ENCODE measurements at regions of chr12 and their contacts with region 1.

Region 1: DNA sequence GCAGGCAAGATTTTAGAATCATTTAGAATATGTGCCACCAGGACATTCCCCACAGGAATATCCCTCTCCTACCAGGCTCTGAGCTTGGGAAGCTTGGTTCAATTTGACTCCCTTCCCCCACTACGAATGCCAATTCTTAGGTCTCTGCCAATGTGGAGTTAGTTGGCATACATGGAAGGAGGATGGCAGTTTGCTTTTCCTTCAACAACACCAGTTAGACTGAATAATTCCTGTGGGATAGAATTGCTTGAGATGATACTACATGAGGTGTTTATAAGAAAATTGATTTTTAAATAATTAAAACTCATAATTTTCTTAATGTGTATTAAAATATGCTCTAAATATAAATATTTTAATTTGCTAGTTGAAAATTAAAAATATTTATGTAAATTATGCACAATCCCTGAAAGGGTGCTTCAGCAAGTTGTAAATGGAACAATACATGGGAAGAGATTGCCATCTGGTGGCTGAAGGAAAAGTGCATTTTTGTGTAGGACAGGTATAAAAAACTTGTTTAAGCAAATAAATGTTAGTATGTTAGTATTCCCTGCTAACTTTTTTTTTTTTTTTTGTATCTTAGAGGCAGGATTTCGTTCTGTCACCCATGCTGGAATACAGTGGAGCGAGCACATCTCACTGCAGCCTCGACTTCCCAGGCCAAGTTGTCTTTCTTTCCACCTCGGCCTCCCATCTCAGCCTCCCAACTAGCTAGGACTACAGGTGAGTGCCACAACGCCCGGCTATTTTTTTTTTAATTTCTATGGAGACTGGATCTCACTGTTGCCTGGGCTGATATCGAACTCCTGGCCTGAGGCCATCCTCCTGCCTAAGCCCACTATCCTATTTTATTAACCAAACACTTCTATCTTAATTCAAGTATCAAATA is 25.8 kb upstream of the STRAP start:
- DNase-seq: peak; percentile 75
- H3K4me3 ChIP-seq: no peak overlapping the region
- H3K27ac ChIP-seq: no peak overlapping the region
- H3K4me1 ChIP-seq: peaks cover 16% of the 10 kb centered on the region
- H3K27me3 ChIP-seq: no peaks in the 10 kb centered on the region
- CTCF ChIP-seq: peak; percentile 82

Region 2: GRCh38 chr12:15276088-15276698 is 580.1 kb before region 1 on chr12:
- CTCF ChIA-PET with region 1: no interaction called
- POLR2A ChIA-PET with region 1: no interaction called
- intact Hi-C with region 1: loop called (anchors 5 kb)
- DNase-seq: peak; percentile 70
- H3K4me3 ChIP-seq: no peak overlapping the region
- H3K27ac ChIP-seq: no peak overlapping the region
- H3K4me1 ChIP-seq: peaks cover 37% of the 10 kb centered on the region
- H3K27me3 ChIP-seq: no peaks in the 10 kb centered on the region
- CTCF ChIP-seq: peak; percentile 74

Region 3: GRCh38 chr12:15532364-15532977 is 323.9 kb before region 1 on chr12:
- CTCF ChIA-PET with region 1: interaction called, 23 read pairs
- POLR2A ChIA-PET with region 1: no interaction called
- intact Hi-C with region 1: loop called (anchors 1 kb)
- DNase-seq: peak; percentile 84
- H3K4me3 ChIP-seq: no peak overlapping the region
- H3K27ac ChIP-seq: no peak overlapping the region
- H3K4me1 ChIP-seq: no peaks in the 10 kb centered on the region
- H3K27me3 ChIP-seq: no peaks in the 10 kb centered on the region
- CTCF ChIP-seq: peak; percentile 70

Region 4: DNA sequence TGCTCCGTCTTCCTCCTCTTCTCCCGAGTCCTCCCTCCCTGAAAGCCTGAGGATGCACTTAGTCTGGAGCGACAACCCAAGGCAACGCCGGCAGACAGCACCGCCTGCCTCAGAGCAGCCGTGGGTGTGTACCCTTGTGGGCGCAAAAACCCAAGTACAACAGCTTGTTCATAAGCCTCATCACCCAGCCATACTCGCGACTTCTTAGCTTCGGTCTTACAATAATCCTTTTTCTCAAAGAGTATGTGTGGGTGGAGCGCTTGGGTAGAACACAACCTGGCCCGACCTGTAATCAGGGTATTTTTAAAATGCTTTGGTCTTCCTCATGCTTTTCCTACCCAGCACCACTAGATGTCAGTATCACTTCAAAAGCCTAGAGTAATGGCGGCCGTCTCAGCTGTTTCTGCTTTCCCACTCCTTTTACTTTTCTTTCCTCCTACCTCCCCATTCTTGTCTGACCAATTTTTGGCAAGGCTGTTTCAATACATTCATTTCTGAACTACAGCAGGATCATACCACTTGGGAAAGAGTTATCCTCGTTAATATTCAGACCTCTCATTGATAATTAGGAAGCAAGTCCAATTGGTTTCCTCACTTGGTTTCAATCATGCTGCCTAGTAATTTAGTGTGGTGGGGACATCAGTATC is 266.0 kb before region 1 on chr12:
- CTCF ChIA-PET with region 1: interaction called, 7 read pairs
- POLR2A ChIA-PET with region 1: no interaction called
- intact Hi-C with region 1: loop called (anchors 1 kb)
- DNase-seq: peak; percentile 80
- H3K4me3 ChIP-seq: peak overlapping the region; percentile 30
- H3K27ac ChIP-seq: no peak overlapping the region
- H3K4me1 ChIP-seq: no peaks in the 10 kb centered on the region
- H3K27me3 ChIP-seq: no peaks in the 10 kb centered on the region
- CTCF ChIP-seq: peak; percentile 94

Measured in A673 (cell line).